A673 (cell line): ENCODE measurements at regions of chr4 and their contacts with region 1.

Region 1: DNA sequence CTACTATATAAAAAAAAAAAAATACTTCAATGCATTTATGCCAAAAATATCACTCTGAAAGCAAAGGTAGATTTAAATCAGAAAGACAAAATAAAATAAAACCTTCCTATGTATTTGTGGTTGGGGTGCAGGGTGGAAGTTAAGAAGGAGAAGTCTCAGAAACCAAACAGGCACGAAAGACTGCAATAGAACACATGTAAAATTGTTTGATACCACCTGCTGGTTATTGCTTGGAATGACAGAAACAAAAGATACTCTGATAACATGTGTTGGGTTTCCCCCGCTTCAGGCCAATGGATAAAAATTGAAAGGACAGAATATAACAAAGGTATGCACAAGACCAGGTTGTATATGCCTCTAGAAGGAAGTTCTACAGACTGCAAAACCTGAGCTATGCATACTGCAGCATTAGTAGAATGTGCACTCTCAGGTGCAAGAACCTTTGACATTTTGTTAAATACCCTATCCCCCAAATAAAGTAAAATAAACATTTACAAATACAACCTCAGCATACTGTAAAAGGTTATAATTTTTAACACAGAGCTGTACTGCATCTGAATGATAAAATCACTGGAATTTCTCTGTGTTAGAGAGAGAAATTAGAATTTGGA is 118.8 kb downstream of the GABRA2 start:
- DNase-seq: peak; percentile 70
- H3K4me3 ChIP-seq: no peak overlapping the region
- H3K27ac ChIP-seq: no peak overlapping the region
- H3K4me1 ChIP-seq: no peaks in the 10 kb centered on the region
- H3K27me3 ChIP-seq: peaks cover 8% of the 10 kb centered on the region
- CTCF ChIP-seq: peak; percentile 68

Region 2: GRCh38 chr4:44927399-44928380 is 1343.4 kb before region 1 on chr4:
- CTCF ChIA-PET with region 1: no interaction called
- POLR2A ChIA-PET with region 1: no interaction called
- intact Hi-C with region 1: loop called (anchors 5 kb)
- DNase-seq: peak; percentile 53
- H3K4me3 ChIP-seq: no peak overlapping the region
- H3K27ac ChIP-seq: no peak overlapping the region
- H3K4me1 ChIP-seq: no peaks in the 10 kb centered on the region
- H3K27me3 ChIP-seq: no peaks in the 10 kb centered on the region
- CTCF ChIP-seq: peak; percentile 63

Region 3: GRCh38 chr4:45550766-45551366 is 720.2 kb before region 1 on chr4:
- CTCF ChIA-PET with region 1: no interaction called
- POLR2A ChIA-PET with region 1: no interaction called
- intact Hi-C with region 1: loop called (anchors 10 kb)
- DNase-seq: no peak
- H3K4me3 ChIP-seq: no peak overlapping the region
- H3K27ac ChIP-seq: no peak overlapping the region
- H3K4me1 ChIP-seq: no peaks in the 10 kb centered on the region
- H3K27me3 ChIP-seq: no peaks in the 10 kb centered on the region
- CTCF ChIP-seq: no peak; the same call in 1 of the 2 replicates

Region 4: GRCh38 chr4:46124773-46125413 is 146.2 kb before region 1 on chr4:
- CTCF ChIA-PET with region 1: no interaction called
- POLR2A ChIA-PET with region 1: no interaction called
- intact Hi-C with region 1: loop called (anchors 5 kb)
- DNase-seq: peak; percentile 56
- H3K4me3 ChIP-seq: no peak overlapping the region
- H3K27ac ChIP-seq: no peak overlapping the region
- H3K4me1 ChIP-seq: peaks cover 4% of the 10 kb centered on the region
- H3K27me3 ChIP-seq: peaks cover 57% of the 10 kb centered on the region
- CTCF ChIP-seq: no peak